Stomach (tissue), 19 donors: ENCODE measurements at regions of chr3 and their contacts with region 1.

Region 1: GRCh38 chr3:141006344-141006743 is 44.8 kb upstream of the SPSB4 start:
- DNase-seq: no peak
- H3K4me3 ChIP-seq: no peak overlapping the region
- H3K27ac ChIP-seq: no peak overlapping the region
- H3K4me1 ChIP-seq: peaks cover 0 to 4% (median 0%) of the 10 kb centered on the region in 4 donors
- H3K27me3 ChIP-seq: peaks cover 0 to 3% (median 0%) of the 10 kb centered on the region in 3 donors
- CTCF ChIP-seq: no peak
- EP300 ChIP-seq: no peak
- POLR2A ChIP-seq: no peak

Region 2: GRCh38 chr3:141192345-141192744 is 186.0 kb after region 1 on chr3:
- intact Hi-C with region 1: loop called (anchors 5 kb)
- DNase-seq: peak; percentile 97 to 99
- H3K4me3 ChIP-seq: no peak overlapping the region
- H3K27ac ChIP-seq: no peak overlapping the region
- H3K4me1 ChIP-seq: peaks cover 0 to 10% (median 4%) of the 10 kb centered on the region in 4 donors
- H3K27me3 ChIP-seq: peaks cover 0 to 21% (median 5%) of the 10 kb centered on the region in 3 donors
- CTCF ChIP-seq: peak in 6 of 7 experiments; percentile 41 to 99 (median 98)
- EP300 ChIP-seq: no peak
- POLR2A ChIP-seq: no peak